Activated naive CD8-positive, alpha-beta T cell treated with anti-CD3 and anti-CD28 coated beads, Interleukin-2, amount 10 ng/mL, durations not matched to agents 7 days and 5 days (primary cell): ENCODE measurements at regions of chr5 and their contacts with region 1.

Region 1: DNA sequence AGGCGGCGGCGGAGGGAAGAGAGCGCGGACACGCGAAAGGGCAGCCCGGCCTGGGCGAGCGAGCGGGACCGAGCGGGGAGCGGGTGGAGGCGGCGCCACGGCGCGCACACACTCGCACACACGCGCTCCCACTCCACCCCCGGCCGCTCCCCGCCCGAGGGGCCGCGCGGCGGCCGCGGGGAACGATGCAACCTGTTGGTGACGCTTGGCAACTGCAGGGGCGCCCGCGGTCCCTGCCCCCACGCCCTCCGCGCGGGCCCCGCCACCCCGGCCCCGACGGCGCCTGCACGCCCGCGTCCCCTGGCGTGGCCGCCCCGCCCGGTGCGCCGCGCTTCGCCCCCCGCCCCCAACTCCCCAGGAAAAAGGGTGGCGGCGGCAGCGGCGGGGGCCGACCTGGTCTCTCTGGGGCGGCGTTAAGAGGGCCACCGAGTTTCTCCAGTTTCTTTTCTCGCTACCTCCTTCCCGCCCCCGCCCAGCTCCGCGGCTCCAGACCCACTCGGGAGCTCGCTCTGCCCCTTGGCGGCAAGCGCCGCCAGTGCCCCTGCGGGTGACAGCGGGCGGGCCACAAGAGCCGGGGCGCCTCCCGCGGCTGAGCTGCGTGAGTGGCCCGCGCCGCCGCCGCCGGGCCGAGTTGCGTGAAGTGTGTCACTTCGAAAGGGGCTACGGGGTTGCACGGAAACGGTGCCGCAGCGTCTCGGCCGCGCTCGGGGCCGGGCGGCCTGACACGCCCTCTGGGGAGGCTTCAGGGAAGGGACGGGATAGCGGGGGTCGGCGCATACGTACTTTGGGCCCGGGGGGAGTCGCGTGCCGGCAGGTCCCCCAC is at the start of gene NR3C1:
- DNase-seq: peak; percentile 92
- ATAC-seq: peak; percentile 68
- H3K4me3 Mint-ChIP-seq: peak within 1 kb of the TSS; percentile 87
- H3K27ac Mint-ChIP-seq: peak within 1 kb of the TSS; percentile 96
- H3K4me1 Mint-ChIP-seq: peaks cover 46% of the 10 kb centered on the region
- H3K27me3 Mint-ChIP-seq: no peaks in the 10 kb centered on the region
- total RNA-seq, gene NR3C1: 95.5 to 102 TPM

Region 2: GRCh38 chr5:143008809-143009521 is 394.8 kb before region 1 on chr5:
- POLR2A ChIA-PET with region 1: interaction called, 80 read pairs
- DNase-seq: peak; percentile 58
- ATAC-seq: peak; percentile 93
- H3K4me3 Mint-ChIP-seq: peak overlapping the region; percentile 65
- H3K27ac Mint-ChIP-seq: peak overlapping the region; percentile 86
- H3K4me1 Mint-ChIP-seq: peaks cover 60% of the 10 kb centered on the region
- H3K27me3 Mint-ChIP-seq: no peaks in the 10 kb centered on the region

Region 3: GRCh38 chr5:143435210-143435657 is 31.4 kb after region 1 on chr5:
- POLR2A ChIA-PET with region 1: interaction called, 63 read pairs
- DNase-seq: no peak
- ATAC-seq: peak; percentile 77
- H3K4me3 Mint-ChIP-seq: peak overlapping the region; percentile 87
- H3K27ac Mint-ChIP-seq: peak overlapping the region; percentile 96
- H3K4me1 Mint-ChIP-seq: peaks cover 39% of the 10 kb centered on the region
- H3K27me3 Mint-ChIP-seq: no peaks in the 10 kb centered on the region